Activated CD8-positive, alpha-beta T cell treated with anti-CD3 and anti-CD28 coated beads, Interleukin-2, amount 10 ng/mL, durations not matched to agents 7 days and 5 days (primary cell): ENCODE measurements at regions of chr3 and their contacts with region 1.

Region 1: GRCh38 chr3:57755668-57756527 is at the start of gene SLMAP:
- DNase-seq: peak; percentile 98
- ATAC-seq: peak; percentile 95
- H3K4me3 Mint-ChIP-seq: peak within 1 kb of the TSS; percentile 97
- H3K27ac Mint-ChIP-seq: peak within 1 kb of the TSS; percentile 94
- H3K4me1 Mint-ChIP-seq: peaks cover 42% of the 10 kb centered on the region
- H3K27me3 Mint-ChIP-seq: peaks cover 4% of the 10 kb centered on the region
- total RNA-seq, gene SLMAP: 63.0 to 65.1 TPM

Region 2: GRCh38 chr3:57555738-57556458 is 200.0 kb before region 1 on chr3 and contains the start of gene PDE12:
- CTCF ChIA-PET with region 1: interaction called, 4 read pairs
- POLR2A ChIA-PET with region 1: interaction called, 12 read pairs
- DNase-seq: peak; percentile 88
- ATAC-seq: peak; percentile 82
- H3K4me3 Mint-ChIP-seq: peak within 1 kb of the TSS; percentile 98
- H3K27ac Mint-ChIP-seq: peak within 1 kb of the TSS; percentile 98
- H3K4me1 Mint-ChIP-seq: peaks cover 29% of the 10 kb centered on the region
- H3K27me3 Mint-ChIP-seq: no peaks in the 10 kb centered on the region
- total RNA-seq, gene PDE12: 27.8 to 31.2 TPM

Region 3: GRCh38 chr3:57597122-57597923 is 158.6 kb before region 1 on chr3 and contains the start of gene ARF4:
- CTCF ChIA-PET with region 1: interaction called, 4 read pairs
- POLR2A ChIA-PET with region 1: interaction called, 17 read pairs
- DNase-seq: peak; percentile 99
- ATAC-seq: peak; percentile 90
- H3K4me3 Mint-ChIP-seq: peak within 1 kb of the TSS; percentile 93
- H3K27ac Mint-ChIP-seq: peak within 1 kb of the TSS; percentile 98
- H3K4me1 Mint-ChIP-seq: peaks cover 48% of the 10 kb centered on the region
- H3K27me3 Mint-ChIP-seq: no peaks in the 10 kb centered on the region
- total RNA-seq, gene ARF4: 51.0 to 52.9 TPM